OCI-LY7 (cell line): ENCODE measurements at regions of chr13 and their contacts with region 1.

Region 1: DNA sequence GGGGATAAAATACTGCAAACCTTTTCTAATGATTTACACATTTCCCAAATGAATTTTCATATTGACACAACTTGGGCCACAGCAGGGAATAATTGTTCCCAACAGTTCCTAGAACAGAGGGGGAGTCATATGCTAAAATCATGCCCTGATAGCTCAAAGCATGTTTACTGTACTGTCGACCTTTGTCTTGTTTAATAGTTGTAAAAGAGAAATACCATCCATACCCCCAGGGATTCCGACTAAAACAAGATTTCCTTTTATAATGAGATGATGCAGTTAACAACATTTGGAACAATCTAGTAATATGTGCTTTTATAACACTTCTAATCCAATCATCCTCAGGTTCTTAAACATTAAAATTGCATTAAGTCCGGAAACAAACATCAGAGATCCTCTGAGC is 759.7 kb downstream of the OLFM4 start:
- DNase-seq: no peak
- H3K4me3 ChIP-seq: no peak overlapping the region
- H3K27ac ChIP-seq: no peak overlapping the region
- H3K4me1 ChIP-seq: no peaks in the 10 kb centered on the region
- CTCF ChIP-seq: no peak

Region 2: DNA sequence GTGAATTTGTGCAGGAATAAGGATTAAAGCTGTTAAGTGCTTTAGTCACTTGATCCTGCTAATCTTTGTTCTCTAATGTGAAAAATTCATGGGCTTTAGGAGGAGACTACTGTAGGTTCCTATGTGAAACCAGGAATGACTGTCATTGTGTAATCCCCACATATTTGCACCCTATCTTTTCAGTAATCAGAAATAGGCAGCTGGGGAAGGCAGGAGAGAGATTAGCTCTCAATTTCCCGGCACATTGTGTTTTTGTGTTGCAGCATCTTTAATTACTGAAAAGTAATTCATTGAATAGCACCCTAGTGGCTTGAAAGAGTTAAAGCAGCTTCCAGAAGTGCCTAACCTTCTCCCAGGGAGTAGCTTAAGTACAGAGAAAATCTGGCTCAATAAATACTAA is 476.7 kb before region 1 on chr13:
- CTCF ChIA-PET with region 1: no interaction called
- POLR2A ChIA-PET with region 1: interaction called, 13 read pairs
- intact Hi-C with region 1: no loop called
- DNase-seq: no peak
- H3K4me3 ChIP-seq: no peak overlapping the region
- H3K27ac ChIP-seq: no peak overlapping the region
- H3K4me1 ChIP-seq: no peaks in the 10 kb centered on the region
- CTCF ChIP-seq: no peak

Region 3: DNA sequence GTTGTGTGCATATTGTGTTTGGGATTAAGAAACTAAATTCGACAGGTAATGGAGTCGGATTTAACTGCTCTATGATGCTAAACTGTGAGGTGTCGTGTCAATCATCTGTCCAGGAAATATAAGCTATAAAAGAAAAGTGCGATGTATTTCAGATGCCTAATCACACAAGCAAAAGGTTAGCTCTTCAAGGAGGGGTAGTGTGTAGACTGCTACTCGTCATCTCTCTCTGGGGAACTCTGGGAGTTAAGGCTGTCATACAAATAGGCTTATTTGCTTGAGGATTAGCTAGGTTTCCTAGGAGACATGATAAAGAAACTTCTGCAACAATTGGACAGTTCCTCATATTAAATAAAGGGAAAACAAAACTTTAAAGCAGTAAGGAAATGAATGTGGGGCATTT is 297.5 kb before region 1 on chr13:
- CTCF ChIA-PET with region 1: no interaction called
- POLR2A ChIA-PET with region 1: no interaction called
- intact Hi-C with region 1: no loop called
- DNase-seq: no peak
- H3K4me3 ChIP-seq: no peak overlapping the region
- H3K27ac ChIP-seq: no peak overlapping the region
- H3K4me1 ChIP-seq: no peaks in the 10 kb centered on the region
- CTCF ChIP-seq: no peak